ENCODE measurements at regions of chr9 and their contacts with region 1.

Region 1: DNA sequence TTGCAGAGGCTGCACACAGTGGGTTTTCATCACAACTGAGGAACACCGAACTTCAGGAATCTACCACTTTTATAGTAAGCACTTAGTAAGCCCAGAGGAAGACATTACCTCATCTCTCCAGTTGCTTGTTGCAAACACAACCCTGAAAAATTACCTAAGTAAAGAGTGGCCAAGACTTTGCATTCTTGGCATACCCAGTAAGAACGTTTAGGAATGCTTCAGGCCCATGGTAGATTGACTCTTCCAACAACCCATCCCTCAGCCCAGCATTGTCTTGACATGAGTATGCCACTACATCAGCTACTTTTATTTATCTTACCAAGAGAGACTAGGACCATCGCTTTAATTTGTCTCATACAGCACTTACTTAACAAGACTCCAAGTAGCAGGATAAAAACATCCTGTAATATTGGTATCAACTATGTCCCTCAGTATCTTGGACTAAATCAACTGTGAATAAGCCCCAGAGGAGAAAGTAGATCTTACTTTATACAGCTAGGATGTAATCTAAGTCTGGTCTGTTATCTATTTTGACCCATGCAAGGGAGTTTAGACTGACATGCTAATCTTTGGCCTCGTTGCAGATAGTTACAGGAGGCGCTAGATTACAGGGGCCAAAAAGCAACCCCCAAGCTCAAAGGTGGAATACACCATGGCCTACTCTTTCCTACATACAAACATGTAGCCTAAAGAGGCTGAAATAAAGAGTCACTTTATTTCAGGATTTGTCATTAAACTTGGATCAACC is 114.9 kb downstream of the INVS start:
- DNase-seq: no peak
- ATAC-seq: no peak
- H3K4me3 Mint-ChIP-seq: no peak overlapping the region
- H3K27ac Mint-ChIP-seq: no peak overlapping the region
- H3K4me1 Mint-ChIP-seq: peaks cover 16% of the 10 kb centered on the region
- H3K27me3 Mint-ChIP-seq: no peaks in the 10 kb centered on the region

Region 2: GRCh38 chr9:100028201-100028784 is 185.6 kb before region 1 on chr9:
- CTCF ChIA-PET with region 1: interaction called, 11 read pairs
- POLR2A ChIA-PET with region 1: no interaction called
- DNase-seq: peak; percentile 76
- ATAC-seq: peak; percentile 92
- H3K4me3 Mint-ChIP-seq: no peak overlapping the region
- H3K27ac Mint-ChIP-seq: no peak overlapping the region
- H3K4me1 Mint-ChIP-seq: peaks cover 6% of the 10 kb centered on the region
- H3K27me3 Mint-ChIP-seq: no peaks in the 10 kb centered on the region

Measured in activated CD8-positive, alpha-beta T cell treated with anti-CD3 and anti-CD28 coated beads, Interleukin-2, amount 10 ng/mL, durations not matched to agents 7 days and 5 days (primary cell).